Gastrocnemius medialis (tissue), 4 donors: ENCODE measurements at regions of chr11 and their contacts with region 1.

Region 1: DNA sequence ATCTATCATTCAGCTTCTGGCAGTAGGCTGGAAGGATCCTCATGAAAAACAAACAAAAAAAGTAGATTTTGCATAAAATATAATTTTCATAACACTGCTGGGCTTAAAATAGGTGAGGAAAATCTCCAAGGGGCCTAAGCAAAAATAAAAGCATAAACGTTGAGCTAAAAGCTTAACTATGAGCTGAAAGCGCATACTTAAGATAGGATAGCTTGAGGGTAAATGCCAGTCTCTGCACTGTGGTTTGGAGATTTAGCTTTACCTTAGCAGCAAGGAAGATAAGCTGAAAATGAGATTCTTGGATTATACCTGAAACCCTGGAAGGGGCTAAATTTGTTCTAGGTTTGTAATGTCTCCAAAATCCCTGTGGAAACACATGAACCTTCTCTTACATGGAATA is 183.7 kb downstream of the GUCY1A2 start:
- DNase-seq: no peak
- ATAC-seq: no peak
- H3K4me3 ChIP-seq: no peak overlapping the region
- H3K27ac ChIP-seq: no peak overlapping the region
- H3K4me1 ChIP-seq: no peaks in the 10 kb centered on the region
- H3K27me3 ChIP-seq: no peaks in the 10 kb centered on the region
- CTCF ChIP-seq: no peak
- POLR2A ChIP-seq: no peak

Region 2: DNA sequence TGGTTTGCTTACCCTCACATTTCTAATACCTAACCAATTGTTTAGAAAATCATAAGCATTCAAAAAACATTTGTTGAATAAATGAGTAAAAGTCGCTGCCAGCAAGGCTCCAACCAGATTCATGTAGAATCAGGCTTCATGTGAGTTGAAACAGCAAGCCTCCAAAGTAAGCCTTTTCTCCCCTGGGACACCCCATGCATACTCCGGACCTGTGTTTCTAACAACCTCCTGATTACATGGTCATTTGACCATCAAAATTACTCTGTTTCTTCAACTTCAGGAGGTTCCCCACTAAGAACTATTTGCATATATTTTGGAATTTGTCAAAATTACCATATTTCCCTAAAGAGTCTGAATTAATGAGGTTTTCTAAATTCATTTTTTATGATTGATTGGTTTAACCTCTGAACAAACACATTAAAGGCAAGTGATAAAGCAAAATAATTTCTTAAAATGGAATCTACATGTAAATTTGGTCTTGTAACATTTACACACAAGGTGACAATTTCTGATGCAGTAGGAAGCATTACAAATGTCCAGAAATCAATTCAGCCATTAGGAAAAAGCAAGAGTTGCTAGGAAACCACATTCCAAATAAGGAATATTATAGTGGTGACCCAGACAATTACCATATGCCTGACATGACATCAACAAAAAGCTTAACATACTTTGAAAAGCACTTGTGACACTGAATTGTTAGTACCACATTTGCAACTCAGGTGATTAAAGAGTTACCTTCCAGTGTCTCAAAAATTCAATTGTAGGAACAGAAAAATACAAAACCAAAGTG is 68.9 kb before region 1 on chr11:
- in situ Hi-C with region 1: no loop called
- intact Hi-C with region 1: loop called (anchors 2 kb)
- DNase-seq: no peak
- ATAC-seq: no peak
- H3K4me3 ChIP-seq: no peak overlapping the region
- H3K27ac ChIP-seq: no peak overlapping the region
- H3K4me1 ChIP-seq: no peaks in the 10 kb centered on the region
- H3K27me3 ChIP-seq: no peaks in the 10 kb centered on the region
- CTCF ChIP-seq: no peak
- POLR2A ChIP-seq: no peak

Region 3: DNA sequence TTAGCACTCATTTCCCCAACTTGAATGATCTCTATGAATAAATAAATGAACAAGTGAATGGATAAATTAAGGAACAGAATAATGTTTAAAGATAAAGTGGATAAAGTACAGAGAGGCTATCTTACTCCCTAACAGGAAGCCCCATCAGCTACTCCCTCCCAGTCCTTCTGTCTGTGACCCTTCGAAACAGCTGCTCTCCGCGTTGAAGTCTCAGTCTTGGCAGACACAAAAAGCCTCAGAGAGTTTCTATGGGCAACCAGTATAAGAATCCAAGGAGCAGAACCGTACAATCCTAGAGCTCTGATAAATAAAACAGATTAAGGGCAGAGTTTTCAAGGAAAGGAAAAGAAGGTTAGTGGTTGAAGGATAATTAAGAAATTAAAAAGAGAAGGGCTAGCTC is 148.7 kb after region 1 on chr11:
- in situ Hi-C with region 1: no loop called
- intact Hi-C with region 1: no loop called
- DNase-seq: no peak
- ATAC-seq: no peak
- H3K4me3 ChIP-seq: no peak overlapping the region
- H3K27ac ChIP-seq: peak overlapping the region in 1 of 4 donors; percentile 18
- H3K4me1 ChIP-seq: no peaks in the 10 kb centered on the region
- H3K27me3 ChIP-seq: no peaks in the 10 kb centered on the region
- CTCF ChIP-seq: no peak
- POLR2A ChIP-seq: no peak

Region 4: GRCh38 chr11:107218117-107219013 is 383.8 kb after region 1 on chr11:
- in situ Hi-C with region 1: no loop called
- intact Hi-C with region 1: no loop called
- DNase-seq: no peak
- ATAC-seq: no peak
- H3K4me3 ChIP-seq: no peak overlapping the region
- H3K27ac ChIP-seq: no peak overlapping the region
- H3K4me1 ChIP-seq: no peaks in the 10 kb centered on the region
- H3K27me3 ChIP-seq: no peaks in the 10 kb centered on the region
- CTCF ChIP-seq: no peak
- POLR2A ChIP-seq: no peak